Ascending aorta (tissue), 2 donors: ENCODE measurements at regions of chr13 and their contacts with region 1.

Region 1: GRCh38 chr13:44050450-44051063 is 170.9 kb downstream of the LACC1 start:
- DNase-seq: no peak
- H3K4me3 ChIP-seq: no peak overlapping the region
- H3K27ac ChIP-seq: no peak overlapping the region
- H3K4me1 ChIP-seq: peaks cover 0 to 24% of the 10 kb centered on the region in 2 donors
- H3K27me3 ChIP-seq: no peaks in the 10 kb centered on the region
- CTCF ChIP-seq: peak; percentile 50 to 80 (median 78)

Region 2: DNA sequence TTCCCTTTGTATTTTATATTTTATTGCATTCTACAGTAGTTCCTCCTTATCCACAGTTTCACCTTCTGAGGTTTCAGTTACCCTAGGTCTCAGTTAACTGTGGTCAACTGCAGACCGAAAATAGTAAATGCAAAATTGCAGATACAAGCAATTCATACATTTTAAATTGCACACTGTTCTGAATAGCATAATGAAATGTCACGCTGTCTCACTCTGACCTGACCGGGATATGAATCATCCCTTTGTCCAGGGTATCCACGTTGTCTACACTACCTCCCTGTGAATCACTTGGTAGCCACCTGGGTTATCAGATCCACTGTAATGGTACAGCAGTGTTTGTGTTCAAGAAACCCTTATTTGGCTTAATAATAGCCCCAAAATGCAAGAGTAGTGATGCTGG is 702.2 kb before region 1 on chr13:
- intact Hi-C with region 1: no loop called
- DNase-seq: no peak
- H3K4me3 ChIP-seq: no peak overlapping the region
- H3K27ac ChIP-seq: no peak overlapping the region
- H3K4me1 ChIP-seq: no peaks in the 10 kb centered on the region
- H3K27me3 ChIP-seq: no peaks in the 10 kb centered on the region
- CTCF ChIP-seq: no peak

Region 3: DNA sequence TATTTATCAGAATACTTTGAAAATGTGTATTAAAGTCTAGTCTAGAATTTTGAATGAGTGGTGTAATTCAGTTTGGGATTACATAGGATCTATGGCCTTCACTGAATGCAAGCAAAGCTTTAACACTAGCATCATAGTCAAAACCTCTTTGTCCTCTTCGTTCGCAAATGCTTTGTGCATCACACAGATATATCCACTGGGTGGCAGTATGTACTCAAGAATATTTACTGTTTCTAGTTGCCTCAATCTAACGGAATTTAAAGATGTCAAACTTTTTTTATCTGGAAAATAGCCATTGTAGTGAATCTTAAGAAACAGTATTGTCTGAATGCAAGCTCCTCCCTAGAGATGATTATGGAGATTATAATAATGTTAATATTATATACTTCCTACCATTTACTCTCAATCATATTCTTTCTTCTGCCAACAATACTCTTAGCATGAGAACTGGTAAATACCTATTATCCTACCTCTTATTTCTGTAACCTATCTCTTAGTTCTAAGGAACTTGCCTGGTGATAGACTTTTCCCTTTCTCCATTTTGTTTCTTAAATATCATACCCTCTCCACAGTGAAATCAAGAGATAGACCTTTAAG is 145.0 kb before region 1 on chr13:
- intact Hi-C with region 1: loop called (anchors 2 kb)
- DNase-seq: no peak
- H3K4me3 ChIP-seq: no peak overlapping the region
- H3K27ac ChIP-seq: no peak overlapping the region
- H3K4me1 ChIP-seq: no peaks in the 10 kb centered on the region
- H3K27me3 ChIP-seq: no peaks in the 10 kb centered on the region
- CTCF ChIP-seq: peak; percentile 74 to 87 (median 79)

Region 4: GRCh38 chr13:44088991-44089413 is 38.4 kb after region 1 on chr13:
- intact Hi-C with region 1: no loop called
- DNase-seq: no peak
- H3K4me3 ChIP-seq: no peak overlapping the region
- H3K27ac ChIP-seq: no peak overlapping the region
- H3K4me1 ChIP-seq: no peaks in the 10 kb centered on the region
- H3K27me3 ChIP-seq: no peaks in the 10 kb centered on the region
- CTCF ChIP-seq: no peak

Region 5: DNA sequence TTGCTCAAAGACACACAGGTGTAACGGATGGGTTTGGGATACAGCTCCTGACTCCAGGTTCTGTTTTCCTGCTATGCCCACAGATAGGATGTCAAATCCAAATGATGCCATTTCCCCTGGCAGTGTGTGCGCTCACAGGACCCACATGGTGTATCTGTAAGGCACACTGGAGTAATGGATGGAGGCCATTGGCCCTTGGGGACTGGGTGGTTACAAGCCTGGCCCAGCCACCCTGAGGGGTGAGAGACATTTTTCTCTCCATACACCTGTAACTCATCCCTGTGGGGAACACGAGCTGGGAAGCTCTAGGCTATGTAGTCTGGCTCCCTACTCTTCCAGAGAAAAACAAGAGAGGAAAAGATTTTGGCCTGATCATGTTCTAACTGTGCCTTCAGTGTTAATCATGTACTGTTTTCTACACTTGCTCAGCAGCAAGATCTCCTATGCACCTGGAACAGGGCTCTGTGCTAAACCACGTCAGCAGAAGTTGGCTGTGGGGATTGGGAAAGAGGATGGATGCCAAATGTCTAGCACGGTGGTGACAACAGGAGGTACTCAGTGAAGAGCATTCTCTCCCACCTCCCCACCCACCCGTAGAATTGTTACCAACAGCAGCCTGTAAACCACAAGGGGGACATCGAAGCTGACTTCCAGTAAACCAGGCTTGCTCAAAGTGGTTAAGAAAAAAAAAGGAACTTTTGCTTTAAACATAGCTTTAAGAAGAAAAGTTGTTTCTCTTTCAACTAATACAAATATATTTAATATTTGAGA is 66.2 kb after region 1 on chr13:
- intact Hi-C with region 1: loop called (anchors 5 kb)
- DNase-seq: no peak
- H3K4me3 ChIP-seq: no peak overlapping the region
- H3K27ac ChIP-seq: peak overlapping the region; percentile 64 to 74
- H3K4me1 ChIP-seq: peaks cover 2 to 31% of the 10 kb centered on the region in 2 donors
- H3K27me3 ChIP-seq: no peaks in the 10 kb centered on the region
- CTCF ChIP-seq: peak in 1 of 3 experiments; percentile 7

Region 6: GRCh38 chr13:44373601-44374348 is 323.2 kb after region 1 on chr13 and contains the start of gene SERP2:
- intact Hi-C with region 1: loop called (anchors 5 kb)
- DNase-seq: no peak
- H3K4me3 ChIP-seq: peak within 1 kb of the TSS; percentile 53 to 79
- H3K27ac ChIP-seq: peak within 1 kb of the TSS; percentile 55 to 59
- H3K4me1 ChIP-seq: peaks cover 0 to 7% of the 10 kb centered on the region in 2 donors
- H3K27me3 ChIP-seq: no peaks in the 10 kb centered on the region
- CTCF ChIP-seq: no peak
- total RNA-seq, gene SERP2: 0.85 TPM